ENCODE measurements at regions of chr1 and their contacts with region 1.

Region 1: DNA sequence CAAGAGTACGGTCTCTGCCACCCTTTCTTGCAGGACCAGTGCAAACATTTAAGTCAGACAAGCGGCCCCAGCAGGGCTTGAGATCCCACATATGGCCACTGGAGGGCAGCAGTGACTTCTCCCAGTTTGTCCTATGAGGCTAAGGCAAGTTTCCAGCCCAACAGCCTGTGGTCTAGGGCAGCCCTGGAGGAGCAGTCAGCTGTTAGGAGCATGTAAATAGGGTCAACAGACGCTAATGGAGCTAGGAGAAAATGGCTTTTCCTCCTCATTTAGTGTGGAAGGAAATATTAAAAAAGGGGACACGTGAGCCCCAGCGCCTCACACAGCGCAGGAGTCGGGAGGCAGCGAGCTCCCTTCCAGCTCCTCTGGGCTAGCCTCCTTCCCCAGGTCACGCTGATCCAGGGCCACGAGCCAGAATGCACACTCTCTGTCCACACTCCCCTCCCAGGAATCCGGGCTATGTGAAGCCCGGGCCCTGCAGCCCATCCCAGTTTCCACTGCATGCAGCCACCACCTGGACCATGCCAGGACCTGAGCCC is 95.6 kb downstream of the LAMC2 start:
- DNase-seq: peak; percentile 85 to 89
- ATAC-seq: peak; percentile 88 to 94
- H3K4me3 ChIP-seq: peak overlapping the region; percentile 6 to 72 (median 29)
- H3K27ac ChIP-seq: peak overlapping the region; percentile 63 to 78 (median 74)
- H3K4me1 ChIP-seq: peaks cover 22 to 26% of the 10 kb centered on the region in 2 donors
- H3K27me3 ChIP-seq: no peaks in the 10 kb centered on the region
- CTCF ChIP-seq: peak; percentile 86 to 94 (median 90)
- POLR2A ChIP-seq: no peak

Region 2: GRCh38 chr1:183318433-183318832 is 36.8 kb after region 1 on chr1:
- in situ Hi-C with region 1: no loop called
- intact Hi-C with region 1: loop called (anchors 1 kb)
- DNase-seq: peak; percentile 66 to 72
- ATAC-seq: peak; percentile 96 to 97
- H3K4me3 ChIP-seq: no peak overlapping the region
- H3K27ac ChIP-seq: peak overlapping the region; percentile 58 to 69 (median 60)
- H3K4me1 ChIP-seq: peaks cover 0 to 8% of the 10 kb centered on the region in 2 donors
- H3K27me3 ChIP-seq: no peaks in the 10 kb centered on the region
- CTCF ChIP-seq: peak in 4 of 5 experiments; percentile 39 to 53 (median 46)
- POLR2A ChIP-seq: no peak

Region 3: DNA sequence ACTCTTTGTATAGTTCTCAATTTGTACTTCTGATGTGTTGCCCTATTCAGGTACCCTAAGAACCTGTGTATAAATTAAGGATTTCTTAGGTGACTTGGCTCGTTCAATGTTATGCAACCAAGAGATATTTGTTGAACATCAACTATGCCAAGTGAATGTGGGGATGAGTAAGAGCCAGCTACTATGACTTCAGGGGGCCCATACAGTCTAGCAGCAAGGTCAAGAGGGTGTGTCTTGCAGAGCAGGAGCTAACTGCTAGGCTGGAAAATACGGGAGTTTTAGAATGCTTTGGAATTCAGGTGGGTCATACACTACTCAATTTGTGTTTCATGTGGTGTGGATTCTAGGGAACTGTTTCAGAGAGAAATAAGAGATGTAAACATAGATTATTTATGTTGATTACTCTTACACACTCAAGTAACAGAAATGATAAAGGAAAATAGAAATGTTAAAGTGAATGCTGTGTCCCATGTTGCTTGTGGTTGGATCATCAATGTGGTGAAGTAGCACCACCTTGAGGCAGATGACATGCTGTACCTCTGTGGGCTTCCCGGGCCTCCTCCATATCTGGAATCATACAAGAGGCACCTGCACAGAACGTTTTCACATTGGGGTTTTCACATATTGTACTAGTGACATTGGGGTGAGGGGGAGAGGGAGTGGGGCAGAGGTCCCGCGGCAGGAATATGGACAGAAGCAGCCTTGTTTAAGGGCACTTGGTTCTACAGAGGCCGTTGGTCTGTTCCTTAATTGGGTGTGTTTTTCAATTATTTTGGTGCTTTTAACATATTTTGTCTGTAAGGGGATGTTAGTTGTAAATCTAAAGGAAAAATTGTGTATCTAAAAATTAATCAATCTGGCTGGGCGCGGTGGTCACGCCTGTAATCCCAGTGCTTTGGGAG is 341.5 kb after region 1 on chr1:
- in situ Hi-C with region 1: loop called in 3 of 4 experiments (anchors 10 to 25 kb)
- intact Hi-C with region 1: loop called (anchors 5 kb)
- DNase-seq: peak in 1 of 2 donors; percentile 32
- ATAC-seq: peak; percentile 81 to 87
- H3K4me3 ChIP-seq: no peak overlapping the region
- H3K27ac ChIP-seq: no peak overlapping the region
- H3K4me1 ChIP-seq: peaks cover 0 to 5% of the 10 kb centered on the region in 2 donors
- H3K27me3 ChIP-seq: no peaks in the 10 kb centered on the region
- CTCF ChIP-seq: peak in 4 of 5 experiments; percentile 27 to 69 (median 42)
- POLR2A ChIP-seq: no peak

Region 4: GRCh38 chr1:183635606-183636333 is 354.1 kb after region 1 on chr1 and contains the start of gene ARPC5:
- in situ Hi-C with region 1: loop called in 1 of 4 experiments (anchors 25 kb)
- intact Hi-C with region 1: no loop called
- DNase-seq: peak; percentile 90
- ATAC-seq: peak; percentile 90 to 97
- H3K4me3 ChIP-seq: peak within 1 kb of the TSS; percentile 79 to 92 (median 88)
- H3K27ac ChIP-seq: peak within 1 kb of the TSS; percentile 82 to 89 (median 84)
- H3K4me1 ChIP-seq: peaks cover 29 to 35% of the 10 kb centered on the region in 2 donors
- H3K27me3 ChIP-seq: no peaks in the 10 kb centered on the region
- CTCF ChIP-seq: no peak
- POLR2A ChIP-seq: peak; percentile 76 to 81
- total RNA-seq, gene ARPC5: 10.8 to 14.6 (median 13.0) TPM

Region 5: GRCh38 chr1:183734543-183735036 is 453.0 kb after region 1 on chr1:
- in situ Hi-C with region 1: no loop called
- intact Hi-C with region 1: loop called (anchors 5 kb)
- DNase-seq: peak; percentile 4 to 15
- ATAC-seq: peak; percentile 51 to 63
- H3K4me3 ChIP-seq: no peak overlapping the region
- H3K27ac ChIP-seq: peak overlapping the region in 1 of 4 donors; percentile 28
- H3K4me1 ChIP-seq: peaks cover 0 to 3% of the 10 kb centered on the region in 2 donors
- H3K27me3 ChIP-seq: no peaks in the 10 kb centered on the region
- CTCF ChIP-seq: no peak
- POLR2A ChIP-seq: no peak

Region 6: DNA sequence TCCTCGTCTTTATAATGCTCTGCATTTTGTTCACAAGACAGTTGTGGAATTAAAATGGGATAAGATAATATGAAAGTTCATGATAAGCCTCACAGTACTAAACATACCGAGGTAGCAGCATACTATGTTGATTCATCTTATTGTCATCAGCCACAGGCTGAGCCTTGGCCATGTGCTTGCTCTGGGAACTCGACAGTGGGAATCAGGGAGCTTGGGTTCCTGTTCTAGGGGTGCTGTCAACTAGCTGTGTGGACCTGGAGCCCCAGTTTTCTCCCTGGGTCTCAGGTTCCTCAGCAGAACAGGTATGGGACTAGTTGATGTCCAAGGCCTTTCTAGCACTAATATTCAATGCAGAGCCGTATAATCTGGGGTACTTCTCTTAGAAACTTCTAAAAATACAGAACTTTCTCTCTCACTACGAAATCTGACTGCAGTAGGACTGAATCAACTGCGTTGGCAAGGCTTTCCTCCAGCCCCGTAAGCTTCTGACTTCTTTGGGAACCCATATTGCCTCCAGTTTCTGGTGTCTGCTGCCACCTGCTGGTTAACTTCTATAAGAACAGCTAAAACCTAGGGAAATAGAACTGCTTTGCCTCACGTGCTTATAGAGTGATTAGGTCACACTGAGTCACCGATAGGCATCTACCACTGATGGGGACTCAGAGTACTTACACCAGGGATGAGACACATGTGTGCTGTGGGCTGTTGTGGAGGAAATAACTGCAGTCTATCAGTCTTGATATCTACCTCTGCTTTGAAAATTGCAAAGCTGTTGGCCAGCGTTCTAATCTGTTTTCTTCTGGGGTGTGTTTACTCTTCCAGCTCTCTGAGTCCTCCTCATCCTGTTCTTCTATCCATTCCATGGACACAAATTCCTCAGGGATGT is 634.2 kb after region 1 on chr1:
- in situ Hi-C with region 1: loop called in 1 of 4 experiments (anchors 25 kb)
- intact Hi-C with region 1: no loop called
- DNase-seq: peak; percentile 61 to 64
- ATAC-seq: peak; percentile 92 to 95
- H3K4me3 ChIP-seq: no peak overlapping the region
- H3K27ac ChIP-seq: peak overlapping the region in 3 of 4 donors; percentile 27 to 46 (median 36)
- H3K4me1 ChIP-seq: peaks cover 8 to 9% of the 10 kb centered on the region in 2 donors
- H3K27me3 ChIP-seq: no peaks in the 10 kb centered on the region
- CTCF ChIP-seq: peak; percentile 81 to 88 (median 84)
- POLR2A ChIP-seq: no peak